ENCODE measurements at regions of chr9 and their contacts with region 1.

Region 1: GRCh38 chr9:38417003-38417945 is 7.0 kb downstream of the IGFBPL1 start:
- DNase-seq: no peak
- H3K4me3 ChIP-seq: no peak overlapping the region
- H3K27ac ChIP-seq: no peak overlapping the region
- H3K27me3 ChIP-seq: peaks cover 61% of the 10 kb centered on the region
- CTCF ChIP-seq: peak; percentile 44

Region 2: GRCh38 chr9:38432922-38433510 is 15.7 kb after region 1 on chr9:
- CTCF ChIA-PET with region 1: interaction called, 15 read pairs
- POLR2A ChIA-PET with region 1: no interaction called
- DNase-seq: peak; percentile 8
- H3K4me3 ChIP-seq: no peak overlapping the region
- H3K27ac ChIP-seq: no peak overlapping the region
- H3K27me3 ChIP-seq: peaks cover 19% of the 10 kb centered on the region
- CTCF ChIP-seq: peak; percentile 64